Activated CD4-positive, alpha-beta memory T cell treated with anti-CD3 and anti-CD28 coated beads, Interleukin-2, amount 10 ng/mL, durations not matched to agents 7 days and 5 days (primary cell): ENCODE measurements at regions of chr1 and their contacts with region 1.

Region 1: GRCh38 chr1:32992489-32993323 is 28.1 kb upstream of the RNF19B start:
- DNase-seq: peak; percentile 77
- H3K4me3 Mint-ChIP-seq: no peak overlapping the region
- H3K27ac Mint-ChIP-seq: peak overlapping the region; percentile 82
- H3K4me1 Mint-ChIP-seq: peaks cover 70% of the 10 kb centered on the region
- H3K27me3 Mint-ChIP-seq: no peaks in the 10 kb centered on the region

Region 2: DNA sequence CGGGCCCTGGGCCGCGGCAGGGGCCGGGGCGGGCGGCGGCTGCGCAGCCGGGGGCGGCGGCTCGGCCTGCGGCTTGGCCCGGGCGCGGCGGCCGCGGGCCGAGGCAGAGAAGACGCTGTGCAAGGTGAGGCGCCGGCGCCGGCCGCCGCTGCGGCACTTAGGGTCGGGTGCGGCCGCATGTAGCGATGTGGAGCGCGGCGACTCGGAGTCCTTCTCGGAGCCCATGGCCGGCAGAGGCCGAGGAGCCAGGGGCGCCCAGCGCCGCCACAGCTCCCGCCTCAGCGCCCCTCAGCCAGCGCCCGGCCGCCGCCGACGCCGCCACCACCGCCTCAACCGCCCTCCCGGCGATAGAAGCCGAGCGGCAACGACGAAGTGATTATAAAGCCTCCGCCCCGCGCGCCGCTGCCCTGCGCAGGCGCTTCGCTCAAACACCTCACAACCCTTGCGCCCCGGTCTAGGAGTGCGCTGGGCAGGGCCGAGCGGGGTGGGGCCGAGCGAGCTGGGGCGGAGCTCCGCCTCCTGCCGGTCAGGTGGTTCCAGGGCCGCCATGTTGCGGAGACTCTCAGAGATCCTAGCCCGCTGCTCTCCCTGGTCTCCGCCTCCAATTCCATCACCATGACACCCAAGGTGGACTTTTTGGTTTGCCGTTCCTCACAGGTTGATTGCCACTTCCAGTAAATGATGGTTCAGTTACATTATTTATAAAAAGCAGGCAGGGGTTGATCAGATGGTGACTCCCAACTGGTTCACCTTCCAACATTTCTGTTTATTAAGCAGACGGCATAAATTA is 28.1 kb before region 1 on chr1 and contains the start of gene RNF19B:
- CTCF ChIA-PET with region 1: interaction called, 3 read pairs
- POLR2A ChIA-PET with region 1: interaction called, 26 read pairs
- DNase-seq: peak; percentile 96
- H3K4me3 Mint-ChIP-seq: peak within 1 kb of the TSS; percentile 79
- H3K27ac Mint-ChIP-seq: peak within 1 kb of the TSS; percentile 85
- H3K4me1 Mint-ChIP-seq: peaks cover 60% of the 10 kb centered on the region
- H3K27me3 Mint-ChIP-seq: peaks cover 3% of the 10 kb centered on the region
- total RNA-seq, gene RNF19B: 42.9 to 46.9 TPM

Region 3: GRCh38 chr1:32981003-32981901 is 11.5 kb before region 1 on chr1:
- CTCF ChIA-PET with region 1: interaction called, 4 read pairs
- POLR2A ChIA-PET with region 1: interaction called, 40 read pairs
- DNase-seq: peak; percentile 73
- H3K4me3 Mint-ChIP-seq: peak overlapping the region; percentile 56
- H3K27ac Mint-ChIP-seq: peak overlapping the region; percentile 87
- H3K4me1 Mint-ChIP-seq: peaks cover 67% of the 10 kb centered on the region
- H3K27me3 Mint-ChIP-seq: no peaks in the 10 kb centered on the region

Region 4: DNA sequence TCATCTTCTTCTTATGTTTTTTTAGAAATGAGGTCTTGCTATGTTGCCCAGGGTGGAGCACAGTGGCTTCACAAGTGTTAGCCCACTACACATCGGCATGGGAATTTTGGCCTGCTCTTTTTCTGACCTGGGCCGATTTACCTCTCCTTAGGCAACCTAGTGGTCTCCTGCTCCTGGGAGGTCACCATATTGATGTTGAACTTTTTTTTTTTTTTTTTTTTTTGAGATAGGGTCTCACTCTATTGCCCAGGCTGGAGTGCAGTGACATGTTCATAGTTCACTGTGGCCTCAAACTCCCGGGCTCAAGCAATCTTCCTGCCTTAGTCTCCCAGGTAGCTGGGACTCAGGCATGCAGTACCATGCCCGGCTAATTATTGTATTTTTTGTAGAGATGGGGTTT is 36.5 kb after region 1 on chr1:
- CTCF ChIA-PET with region 1: no interaction called
- POLR2A ChIA-PET with region 1: no interaction called
- DNase-seq: no peak
- H3K4me3 Mint-ChIP-seq: no peak overlapping the region
- H3K27ac Mint-ChIP-seq: no peak overlapping the region
- H3K4me1 Mint-ChIP-seq: peaks cover 69% of the 10 kb centered on the region
- H3K27me3 Mint-ChIP-seq: no peaks in the 10 kb centered on the region